Heart left ventricle (tissue), 16 donors: ENCODE measurements at regions of chr6 and their contacts with region 1.

Region 1: GRCh38 chr6:156776840-156777576 is at the start of gene ARID1B:
- DNase-seq: peak; percentile 87 to 93 (median 89)
- ATAC-seq: peak; percentile 62 to 85 (median 81)
- H3K4me3 ChIP-seq: peak within 1 kb of the TSS; percentile 67 to 97 (median 80)
- H3K27ac ChIP-seq: peak within 1 kb of the TSS; percentile 96 to 99 (median 98)
- H3K4me1 ChIP-seq: peaks cover 0 to 47% (median 30%) of the 10 kb centered on the region in 12 donors
- H3K27me3 ChIP-seq: no peaks in the 10 kb centered on the region
- CTCF ChIP-seq: no peak
- POLR2A ChIP-seq: peak in 1 of 2 donors; percentile 56
- total RNA-seq, gene ARID1B: 34.3 to 76.1 (median 53.9) TPM

Region 2: DNA sequence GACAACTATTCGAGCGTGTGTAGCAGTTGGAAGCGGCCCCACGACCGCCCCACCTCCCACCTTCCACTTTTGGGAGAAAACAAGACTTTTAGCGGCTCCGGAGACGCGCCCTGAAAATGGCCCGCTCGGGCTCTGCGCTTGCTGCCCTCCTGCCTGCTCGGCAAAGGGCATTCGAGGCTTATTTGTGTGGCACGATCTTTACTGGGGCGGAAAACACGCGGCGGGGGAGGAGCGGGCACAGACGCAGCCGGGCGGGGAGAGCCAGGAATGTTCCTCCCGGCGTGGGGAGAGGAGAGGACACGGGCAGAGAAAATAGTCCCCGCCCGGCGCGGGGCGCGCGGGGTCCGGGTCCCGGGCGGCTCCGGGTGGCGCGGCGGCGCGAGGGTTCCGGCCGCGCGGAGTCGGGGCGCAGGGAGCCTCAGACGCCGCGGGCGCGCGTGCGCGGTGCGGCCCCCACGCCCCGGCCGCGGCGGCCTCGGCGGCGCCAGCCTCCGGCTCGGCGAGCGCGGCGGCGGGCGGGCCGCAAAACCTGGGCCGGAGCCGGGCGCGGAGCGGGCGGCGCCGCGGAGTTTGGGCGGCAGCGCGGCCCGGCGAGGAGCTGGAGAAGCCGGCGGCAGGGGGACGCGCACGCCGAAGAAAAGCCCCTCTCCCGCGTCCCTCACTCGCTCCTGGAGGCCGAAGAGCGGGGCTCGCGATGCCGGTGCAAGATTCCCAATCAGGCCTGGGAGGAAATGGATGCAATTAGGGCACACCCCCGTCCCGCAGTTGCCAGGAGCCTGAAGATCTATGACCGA is 89.8 kb before region 1 on chr6:
- intact Hi-C with region 1: loop called (anchors 1 to 5 kb)
- DNase-seq: peak; percentile 92 to 95 (median 94)
- ATAC-seq: peak; percentile 96 to 98 (median 96)
- H3K4me3 ChIP-seq: peak overlapping the region; percentile 36 to 91 (median 76)
- H3K27ac ChIP-seq: peak overlapping the region; percentile 91 to 100 (median 98)
- H3K4me1 ChIP-seq: peaks cover 0 to 18% (median 11%) of the 10 kb centered on the region in 12 donors
- H3K27me3 ChIP-seq: no peaks in the 10 kb centered on the region
- CTCF ChIP-seq: no peak
- POLR2A ChIP-seq: peak in 1 of 2 donors; percentile 80

Region 3: GRCh38 chr6:156822747-156823206 is 45.8 kb after region 1 on chr6:
- intact Hi-C with region 1: loop called in 1 of 10 experiments (anchors 5 kb)
- DNase-seq: no peak
- ATAC-seq: peak; percentile 65 to 74 (median 68)
- H3K4me3 ChIP-seq: no peak overlapping the region
- H3K27ac ChIP-seq: peak overlapping the region in 8 of 12 donors; percentile 14 to 50 (median 31)
- H3K4me1 ChIP-seq: peaks cover 0 to 95% (median 52%) of the 10 kb centered on the region in 12 donors
- H3K27me3 ChIP-seq: no peaks in the 10 kb centered on the region
- CTCF ChIP-seq: no peak
- POLR2A ChIP-seq: no peak

Region 4: GRCh38 chr6:156886409-156886808 is 109.4 kb after region 1 on chr6:
- intact Hi-C with region 1: loop called in 1 of 10 experiments (anchors 5 kb)
- DNase-seq: peak in 3 of 5 donors; percentile 42 to 54 (median 45)
- ATAC-seq: peak; percentile 29 to 72 (median 66)
- H3K4me3 ChIP-seq: no peak overlapping the region
- H3K27ac ChIP-seq: peak overlapping the region in 11 of 12 donors; percentile 6 to 54 (median 30)
- H3K4me1 ChIP-seq: peaks cover 8 to 93% (median 75%) of the 10 kb centered on the region in 12 donors
- H3K27me3 ChIP-seq: no peaks in the 10 kb centered on the region
- CTCF ChIP-seq: no peak
- POLR2A ChIP-seq: no peak

Region 5: GRCh38 chr6:157021344-157021992 is 244.5 kb after region 1 on chr6:
- intact Hi-C with region 1: loop called (anchors 1 to 10 kb)
- DNase-seq: peak; percentile 93 to 96 (median 93)
- ATAC-seq: peak; percentile 89 to 95 (median 94)
- H3K4me3 ChIP-seq: peak overlapping the region; percentile 53 to 96 (median 82)
- H3K27ac ChIP-seq: peak overlapping the region; percentile 95 to 100 (median 99)
- H3K4me1 ChIP-seq: peaks cover 0 to 55% (median 32%) of the 10 kb centered on the region in 12 donors
- H3K27me3 ChIP-seq: no peaks in the 10 kb centered on the region
- CTCF ChIP-seq: peak; percentile 11 to 72 (median 48)
- POLR2A ChIP-seq: peak in 1 of 2 donors; percentile 95

Region 6: DNA sequence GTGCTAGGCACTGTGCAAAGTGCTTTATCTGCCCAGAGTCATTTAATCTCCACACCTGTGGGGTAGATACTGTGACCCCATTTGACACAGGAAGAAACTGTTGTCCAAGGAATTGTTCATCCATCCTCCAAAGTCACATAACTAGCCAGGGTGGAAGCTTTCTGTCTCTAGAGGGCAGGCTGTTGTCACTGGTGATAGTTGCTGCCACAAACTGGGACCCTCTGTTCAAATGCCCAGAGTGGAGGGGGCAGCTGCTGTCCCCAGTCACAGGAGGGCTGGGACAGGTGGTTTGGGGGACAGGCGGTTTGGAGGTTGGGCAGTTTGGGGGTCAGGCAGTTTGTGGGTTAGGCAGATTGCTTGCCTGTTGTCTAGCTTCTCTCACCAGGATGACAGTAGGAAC is 562.4 kb after region 1 on chr6:
- intact Hi-C with region 1: no loop called
- DNase-seq: no peak
- ATAC-seq: no peak
- H3K4me3 ChIP-seq: no peak overlapping the region
- H3K27ac ChIP-seq: no peak overlapping the region
- H3K4me1 ChIP-seq: no peaks in the 10 kb centered on the region
- H3K27me3 ChIP-seq: no peaks in the 10 kb centered on the region
- CTCF ChIP-seq: no peak
- POLR2A ChIP-seq: no peak